ENCODE measurements at regions of chr5 and their contacts with region 1.

Region 1: GRCh38 chr5:52725065-52725746 is 62.5 kb upstream of the ITGA1 start:
- DNase-seq: peak; percentile 81 to 94 (median 90)
- H3K4me3 ChIP-seq: peak overlapping the region in 1 of 2 donors; percentile 18
- H3K4me3 Mint-ChIP-seq: peak overlapping the region; percentile 78 to 90 (median 88)
- H3K27ac ChIP-seq: peak overlapping the region; percentile 41
- H3K27ac Mint-ChIP-seq: peak overlapping the region; percentile 89 to 98 (median 97)
- H3K4me1 ChIP-seq: peaks cover 44% of the 10 kb centered on the region
- H3K4me1 Mint-ChIP-seq: peaks cover 44 to 74% (median 60%) of the 10 kb centered on the region in 4 donors
- H3K27me3 ChIP-seq: no peaks in the 10 kb centered on the region
- H3K27me3 Mint-ChIP-seq: no peaks in the 10 kb centered on the region

Region 2: GRCh38 chr5:52693280-52693679 is 31.9 kb before region 1 on chr5:
- CTCF ChIA-PET with region 1: interaction called, 19 read pairs
- POLR2A ChIA-PET with region 1: interaction called, 3 read pairs
- intact Hi-C with region 1: no loop called
- DNase-seq: peak in 4 of 5 donors; percentile 23 to 32 (median 28)
- H3K4me3 ChIP-seq: no peak overlapping the region
- H3K4me3 Mint-ChIP-seq: no peak overlapping the region
- H3K27ac ChIP-seq: no peak overlapping the region
- H3K27ac Mint-ChIP-seq: no peak overlapping the region
- H3K4me1 ChIP-seq: no peaks in the 10 kb centered on the region
- H3K4me1 Mint-ChIP-seq: peaks cover 4 to 7% (median 5%) of the 10 kb centered on the region in 4 donors
- H3K27me3 ChIP-seq: no peaks in the 10 kb centered on the region
- H3K27me3 Mint-ChIP-seq: no peaks in the 10 kb centered on the region

Region 3: DNA sequence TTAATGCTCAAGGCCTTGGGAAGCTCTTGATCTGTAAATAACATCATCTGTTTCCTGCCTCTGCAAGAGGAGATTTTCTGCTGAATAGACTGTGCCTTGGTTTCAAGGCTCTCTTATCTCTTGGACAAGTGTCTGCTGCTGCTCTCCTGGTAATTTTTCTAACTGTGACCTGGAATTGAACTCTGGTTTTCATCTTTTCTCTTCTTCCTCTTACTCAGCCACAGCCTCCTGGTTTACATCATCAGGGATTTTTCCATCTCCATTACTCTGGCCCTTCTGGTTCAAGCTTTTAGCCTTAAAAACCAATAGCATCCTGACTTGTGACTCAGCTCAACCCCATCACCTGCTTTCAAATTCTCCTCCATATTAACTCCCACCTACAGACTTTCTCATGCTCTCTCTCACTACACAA is 12.9 kb after region 1 on chr5:
- CTCF ChIA-PET with region 1: interaction called, 3 read pairs
- POLR2A ChIA-PET with region 1: interaction called, 23 read pairs
- intact Hi-C with region 1: no loop called
- DNase-seq: no peak
- H3K4me3 ChIP-seq: no peak overlapping the region
- H3K4me3 Mint-ChIP-seq: peak overlapping the region in 7 of 8 donors; percentile 2 to 72 (median 41)
- H3K27ac ChIP-seq: no peak overlapping the region
- H3K27ac Mint-ChIP-seq: peak overlapping the region in 6 of 7 donors; percentile 17 to 82 (median 58)
- H3K4me1 ChIP-seq: peaks cover 27% of the 10 kb centered on the region
- H3K4me1 Mint-ChIP-seq: peaks cover 19 to 45% (median 31%) of the 10 kb centered on the region in 4 donors
- H3K27me3 ChIP-seq: no peaks in the 10 kb centered on the region
- H3K27me3 Mint-ChIP-seq: no peaks in the 10 kb centered on the region

Region 4: GRCh38 chr5:52743970-52744369 is 18.8 kb after region 1 on chr5:
- CTCF ChIA-PET with region 1: interaction called, 4 read pairs
- POLR2A ChIA-PET with region 1: interaction called, 23 read pairs
- intact Hi-C with region 1: loop called (anchors 1 kb)
- DNase-seq: peak; percentile 40 to 59 (median 52)
- H3K4me3 ChIP-seq: no peak overlapping the region
- H3K4me3 Mint-ChIP-seq: peak overlapping the region; percentile 26 to 79 (median 68)
- H3K27ac ChIP-seq: peak overlapping the region; percentile 34
- H3K27ac Mint-ChIP-seq: peak overlapping the region; percentile 45 to 97 (median 90)
- H3K4me1 ChIP-seq: peaks cover 45% of the 10 kb centered on the region
- H3K4me1 Mint-ChIP-seq: peaks cover 40 to 69% (median 49%) of the 10 kb centered on the region in 4 donors
- H3K27me3 ChIP-seq: no peaks in the 10 kb centered on the region
- H3K27me3 Mint-ChIP-seq: no peaks in the 10 kb centered on the region

Region 5: GRCh38 chr5:52771343-52772039 is 46.3 kb after region 1 on chr5:
- CTCF ChIA-PET with region 1: interaction called, 5 read pairs
- POLR2A ChIA-PET with region 1: interaction called, 14 read pairs
- intact Hi-C with region 1: loop called (anchors 1 kb)
- DNase-seq: peak in 4 of 5 donors; percentile 25 to 40 (median 29)
- H3K4me3 ChIP-seq: no peak overlapping the region
- H3K4me3 Mint-ChIP-seq: peak overlapping the region in 7 of 8 donors; percentile 29 to 84 (median 63)
- H3K27ac ChIP-seq: peak overlapping the region; percentile 16
- H3K27ac Mint-ChIP-seq: peak overlapping the region; percentile 24 to 87 (median 81)
- H3K4me1 ChIP-seq: peaks cover 50% of the 10 kb centered on the region
- H3K4me1 Mint-ChIP-seq: peaks cover 31 to 45% (median 42%) of the 10 kb centered on the region in 4 donors
- H3K27me3 ChIP-seq: no peaks in the 10 kb centered on the region
- H3K27me3 Mint-ChIP-seq: peaks cover 0 to 2% of the 10 kb centered on the region in 2 donors

Region 6: DNA sequence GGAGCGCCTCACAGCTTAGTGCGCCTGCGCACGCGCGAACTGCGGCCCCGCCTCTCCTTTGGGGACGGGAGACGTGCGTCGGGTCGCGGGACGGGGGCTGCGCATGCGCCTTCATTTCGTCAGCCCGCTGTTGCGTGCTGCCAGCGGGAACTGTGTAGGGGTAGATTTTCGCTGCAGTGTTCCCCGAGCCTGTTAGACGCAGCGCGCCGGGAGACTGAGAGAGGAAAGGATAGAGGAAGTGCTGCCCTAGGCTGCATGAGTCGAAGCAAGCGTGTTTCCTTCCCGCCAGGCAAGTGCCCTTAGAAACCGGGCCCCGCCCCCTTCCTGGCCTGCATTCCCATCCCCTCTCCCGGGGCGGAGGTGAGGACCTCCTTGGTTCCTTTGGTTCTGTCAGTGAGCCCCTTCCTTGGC is 74.8 kb after region 1 on chr5:
- CTCF ChIA-PET with region 1: interaction called, 9 read pairs
- POLR2A ChIA-PET with region 1: interaction called, 36 read pairs
- intact Hi-C with region 1: loop called (anchors 1 kb)
- DNase-seq: peak; percentile 92 to 95 (median 94)
- H3K4me3 ChIP-seq: peak overlapping the region; percentile 78 to 98
- H3K4me3 Mint-ChIP-seq: peak overlapping the region; percentile 93 to 99 (median 98)
- H3K27ac ChIP-seq: peak overlapping the region; percentile 72
- H3K27ac Mint-ChIP-seq: peak overlapping the region; percentile 90 to 99 (median 96)
- H3K4me1 ChIP-seq: peaks cover 49% of the 10 kb centered on the region
- H3K4me1 Mint-ChIP-seq: peaks cover 37 to 67% (median 49%) of the 10 kb centered on the region in 4 donors
- H3K27me3 ChIP-seq: no peaks in the 10 kb centered on the region
- H3K27me3 Mint-ChIP-seq: no peaks in the 10 kb centered on the region

Region 7: GRCh38 chr5:53109443-53110127 is 384.4 kb after region 1 on chr5 and contains the start of gene MOCS2:
- CTCF ChIA-PET with region 1: no interaction called
- POLR2A ChIA-PET with region 1: no interaction called
- intact Hi-C with region 1: loop called (anchors 10 kb)
- DNase-seq: peak; percentile 86 to 93 (median 91)
- H3K4me3 ChIP-seq: peak within 1 kb of the TSS; percentile 82 to 97
- H3K4me3 Mint-ChIP-seq: peak within 1 kb of the TSS; percentile 90 to 98 (median 95)
- H3K27ac ChIP-seq: peak within 1 kb of the TSS; percentile 68
- H3K27ac Mint-ChIP-seq: peak within 1 kb of the TSS; percentile 75 to 97 (median 95)
- H3K4me1 ChIP-seq: peaks cover 34% of the 10 kb centered on the region
- H3K4me1 Mint-ChIP-seq: peaks cover 31 to 59% (median 40%) of the 10 kb centered on the region in 4 donors
- H3K27me3 ChIP-seq: no peaks in the 10 kb centered on the region
- H3K27me3 Mint-ChIP-seq: no peaks in the 10 kb centered on the region
- total RNA-seq, gene MOCS2: 23.1 to 26.6 TPM

Measured in CD4-positive, alpha-beta memory T cell (primary cell).